ENCODE measurements at regions of chr1 and their contacts with region 1.

Region 1: DNA sequence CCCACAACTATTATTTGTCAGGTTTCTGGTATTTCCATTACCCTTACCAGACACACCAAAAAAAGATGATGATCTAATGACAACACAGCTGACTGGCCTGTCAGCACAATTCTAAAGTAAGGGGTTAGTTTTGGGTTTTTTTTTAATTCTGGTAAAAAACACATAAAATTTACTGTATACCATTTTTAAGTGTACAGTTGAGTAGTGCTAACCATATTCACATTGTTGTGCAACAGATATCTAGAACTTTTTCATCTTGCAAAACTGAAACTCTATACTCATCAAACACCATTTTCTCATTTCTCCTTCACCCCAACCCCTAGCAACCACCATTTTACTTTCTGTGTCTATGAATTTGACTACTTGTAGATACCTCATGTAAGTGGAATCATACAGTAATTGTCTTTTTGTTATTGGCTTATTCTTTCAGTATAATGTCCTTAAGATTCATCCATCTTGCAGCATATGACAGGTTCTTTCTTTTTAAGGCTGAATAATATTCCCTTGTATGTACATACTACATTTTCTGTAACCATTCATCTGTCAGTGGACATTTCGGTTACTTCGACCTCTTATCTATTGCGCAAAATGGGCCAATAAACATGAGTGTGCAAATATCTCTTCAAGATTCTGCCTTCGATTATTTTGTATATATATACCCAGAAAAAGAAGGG is 29.8 kb downstream of the ARNT start:
- DNase-seq: no peak
- ATAC-seq: peak in 1 of 4 donors; percentile 42
- H3K4me3 ChIP-seq: no peak overlapping the region
- H3K27ac ChIP-seq: no peak overlapping the region
- H3K4me1 ChIP-seq: peaks cover 15% of the 10 kb centered on the region
- H3K27me3 ChIP-seq: no peaks in the 10 kb centered on the region
- CTCF ChIP-seq: no peak

Region 2: DNA sequence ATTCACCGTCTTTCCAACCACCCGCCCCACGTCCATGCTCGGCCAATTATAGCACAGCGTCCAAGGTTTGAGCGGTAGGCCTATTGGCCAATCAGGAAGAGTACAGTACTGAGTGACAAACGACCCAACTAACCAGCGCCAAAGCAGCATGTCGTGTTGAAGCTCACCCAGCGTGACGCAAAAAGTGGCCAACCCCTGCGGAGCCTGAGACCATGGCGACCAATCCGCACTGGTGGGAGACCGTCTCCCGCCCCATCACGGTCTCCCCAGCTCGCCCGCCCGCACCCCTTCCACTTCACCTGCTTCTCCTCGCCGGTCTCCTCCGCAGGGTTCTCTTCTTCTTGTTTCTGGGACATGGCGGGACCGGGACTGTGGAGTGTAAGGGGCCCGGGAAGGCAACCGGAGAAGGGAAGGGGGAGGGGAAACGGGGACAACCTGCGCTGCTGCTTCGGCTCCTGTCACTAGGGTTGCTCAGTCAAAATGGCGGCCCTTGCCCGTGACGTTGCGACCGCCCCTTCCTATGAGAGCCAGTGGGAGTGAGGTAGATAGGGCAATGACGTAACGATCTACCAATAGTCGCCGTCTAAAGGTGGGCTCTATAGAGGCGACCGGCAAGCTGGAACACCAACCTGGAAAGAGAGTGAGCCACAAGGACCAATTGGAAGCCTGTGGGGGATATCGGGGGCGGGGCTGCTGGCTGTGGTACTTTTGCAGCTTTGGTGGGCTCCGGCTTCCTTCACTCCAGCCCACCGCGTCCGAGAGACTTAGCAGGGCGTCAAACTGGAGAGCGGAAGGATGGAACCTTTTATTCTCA is 217.3 kb before region 1 on chr1 and contains the start of gene ENSA:
- intact Hi-C with region 1: no loop called
- DNase-seq: peak; percentile 97 to 99
- ATAC-seq: peak; percentile 93 to 96 (median 94)
- H3K4me3 ChIP-seq: peak within 1 kb of the TSS; percentile 77
- H3K27ac ChIP-seq: peak within 1 kb of the TSS; percentile 93
- H3K4me1 ChIP-seq: peaks cover 30% of the 10 kb centered on the region
- H3K27me3 ChIP-seq: no peaks in the 10 kb centered on the region
- CTCF ChIP-seq: no peak
- total RNA-seq, gene ENSA: 120 to 196 (median 162) TPM

Region 3: DNA sequence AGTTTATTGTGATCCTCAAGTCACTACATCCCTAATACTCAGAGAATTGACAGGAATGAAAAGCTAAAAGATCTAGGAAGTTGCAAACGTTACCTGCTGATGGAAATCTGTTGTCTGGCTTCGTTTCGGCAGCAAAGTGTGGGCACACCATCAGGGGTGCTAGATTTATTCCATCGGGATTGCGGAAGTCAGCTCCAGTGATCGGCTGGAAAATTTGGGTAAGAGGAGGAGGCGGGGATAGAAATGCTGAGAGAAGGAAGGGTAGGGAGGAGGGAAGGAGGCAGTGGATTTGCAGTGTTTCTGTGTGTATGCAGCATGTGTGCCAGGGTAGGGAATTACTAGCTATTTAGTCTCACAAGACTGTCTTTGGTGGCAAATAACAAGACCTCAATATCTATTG is 38.5 kb before region 1 on chr1 and contains the start of gene CTSK:
- intact Hi-C with region 1: loop called in 1 of 2 experiments (anchors 10 kb)
- DNase-seq: no peak
- ATAC-seq: peak in 2 of 4 donors; percentile 26 to 42
- H3K4me3 ChIP-seq: peak within 1 kb of the TSS; percentile 39
- H3K27ac ChIP-seq: no peak within 1 kb of the TSS
- H3K4me1 ChIP-seq: no peaks in the 10 kb centered on the region
- H3K27me3 ChIP-seq: no peaks in the 10 kb centered on the region
- CTCF ChIP-seq: no peak
- total RNA-seq, gene CTSK: 2.8 to 16.9 (median 5.7) TPM

Region 4: DNA sequence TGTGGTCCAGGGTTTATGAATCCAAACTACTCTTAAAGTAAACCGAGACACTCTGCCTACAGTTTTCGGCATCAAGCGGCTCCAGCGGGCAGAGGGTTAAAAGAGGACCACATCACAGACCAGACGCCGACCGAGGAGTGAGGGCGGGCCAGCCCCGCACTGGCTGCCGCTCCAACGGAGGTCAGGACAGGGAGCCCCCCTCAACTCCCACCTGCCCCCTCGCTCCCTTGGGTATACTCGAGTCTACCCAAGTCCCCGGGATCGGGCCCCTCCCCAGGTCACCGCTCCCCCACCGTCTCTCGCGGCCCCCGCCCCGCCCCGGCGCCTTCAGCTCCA is 29.5 kb after region 1 on chr1:
- intact Hi-C with region 1: no loop called
- DNase-seq: no peak
- ATAC-seq: peak; percentile 61 to 73 (median 68)
- H3K4me3 ChIP-seq: peak overlapping the region; percentile 86
- H3K27ac ChIP-seq: peak overlapping the region; percentile 94
- H3K4me1 ChIP-seq: peaks cover 12% of the 10 kb centered on the region
- H3K27me3 ChIP-seq: no peaks in the 10 kb centered on the region
- CTCF ChIP-seq: no peak

Measured in psoas muscle (tissue), 8 donors.